ENCODE measurements at regions of chr14 and their contacts with region 1.

Region 1: GRCh38 chr14:46581036-46581671 is 70.4 kb downstream of the RPL10L start:
- DNase-seq: no peak
- ATAC-seq: no peak
- H3K4me3 ChIP-seq: no peak overlapping the region
- H3K4me3 Mint-ChIP-seq: no peak overlapping the region
- H3K27ac ChIP-seq: no peak overlapping the region
- H3K27ac Mint-ChIP-seq: no peak overlapping the region
- H3K4me1 ChIP-seq: no peaks in the 10 kb centered on the region
- H3K4me1 Mint-ChIP-seq: no peaks in the 10 kb centered on the region
- H3K27me3 ChIP-seq: no peaks in the 10 kb centered on the region
- H3K27me3 Mint-ChIP-seq: no peaks in the 10 kb centered on the region

Region 2: GRCh38 chr14:47278234-47278842 is 697.2 kb after region 1 on chr14:
- CTCF ChIA-PET with region 1: no interaction called
- POLR2A ChIA-PET with region 1: no interaction called
- intact Hi-C with region 1: loop called in 1 of 2 experiments (anchors 5 kb)
- DNase-seq: peak in 4 of 9 donors; percentile 0 to 26 (median 3)
- ATAC-seq: no peak
- H3K4me3 ChIP-seq: no peak overlapping the region
- H3K4me3 Mint-ChIP-seq: no peak overlapping the region
- H3K27ac ChIP-seq: no peak overlapping the region
- H3K27ac Mint-ChIP-seq: no peak overlapping the region
- H3K4me1 ChIP-seq: no peaks in the 10 kb centered on the region
- H3K4me1 Mint-ChIP-seq: no peaks in the 10 kb centered on the region
- H3K27me3 ChIP-seq: no peaks in the 10 kb centered on the region
- H3K27me3 Mint-ChIP-seq: no peaks in the 10 kb centered on the region

Measured in naive thymus-derived CD4-positive, alpha-beta T cell (primary cell).